ENCODE measurements at regions of chr6 and their contacts with region 1.

Region 1: DNA sequence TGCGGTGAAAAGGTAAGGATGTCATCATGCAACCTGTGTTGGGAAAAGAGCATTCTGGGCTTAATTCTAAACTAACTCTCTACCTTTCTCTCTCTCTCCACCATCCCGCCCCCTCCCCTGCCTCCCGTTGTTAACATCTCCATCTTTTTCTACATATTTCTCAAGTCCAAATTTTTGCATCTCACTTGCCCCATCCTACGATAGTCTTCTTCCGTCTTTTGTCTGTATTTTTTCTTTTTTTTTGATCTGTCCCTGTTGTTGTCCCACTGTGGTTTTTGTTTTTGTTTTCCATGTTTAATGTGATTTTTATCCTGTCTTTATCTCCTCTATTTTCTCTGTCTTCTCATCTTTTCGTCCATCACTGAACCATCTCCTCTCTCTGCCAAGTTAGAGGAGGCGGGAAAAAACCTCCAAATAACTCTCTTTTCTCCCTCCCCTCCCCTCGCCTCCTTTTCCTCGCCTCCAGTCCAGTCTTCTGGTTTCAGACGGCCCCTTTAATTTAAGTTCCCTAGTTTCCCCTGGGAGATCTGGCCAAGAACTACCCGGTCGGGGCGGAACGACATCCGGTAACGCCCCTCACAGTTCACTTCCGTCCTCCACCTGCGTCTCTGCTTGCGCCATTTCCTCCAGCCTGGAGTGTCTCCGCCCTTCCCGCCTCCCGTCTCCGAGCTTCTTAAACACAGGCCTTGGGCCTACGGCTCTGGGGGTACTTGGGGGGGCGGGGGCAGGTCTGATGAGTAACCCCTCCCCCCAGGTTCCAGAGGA is at the start of gene NFKBIL1:
- DNase-seq: peak; percentile 88
- CTCF ChIP-seq: no peak

Region 2: GRCh38 chr6:31592396-31592771 is 45.2 kb after region 1 on chr6:
- in situ Hi-C with region 1: loop called (anchors 5 kb)
- DNase-seq: no peak
- CTCF ChIP-seq: no peak

Region 3: DNA sequence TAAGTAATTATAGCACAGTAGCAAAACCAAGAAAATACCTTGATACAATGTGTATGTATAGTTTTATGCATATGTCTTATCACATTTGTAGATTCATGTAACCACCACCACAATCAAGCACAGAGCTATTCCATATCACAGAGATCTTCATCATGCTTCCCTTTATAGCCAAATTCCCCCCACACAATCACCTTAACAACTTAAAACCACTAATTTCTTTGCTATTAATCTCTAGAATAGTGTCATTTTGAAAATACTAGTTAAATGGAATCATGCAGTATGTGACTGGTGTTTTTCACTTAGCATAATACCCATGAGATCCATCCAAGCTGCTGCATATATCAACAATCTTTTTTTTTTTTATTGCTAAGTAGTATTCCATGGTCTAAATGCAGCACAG is 900.8 kb after region 1 on chr6:
- in situ Hi-C with region 1: no loop called
- DNase-seq: no peak
- CTCF ChIP-seq: no peak

Measured in GM13977 (cell line).